ENCODE measurements at regions of chr1 and their contacts with region 1.

Region 1: DNA sequence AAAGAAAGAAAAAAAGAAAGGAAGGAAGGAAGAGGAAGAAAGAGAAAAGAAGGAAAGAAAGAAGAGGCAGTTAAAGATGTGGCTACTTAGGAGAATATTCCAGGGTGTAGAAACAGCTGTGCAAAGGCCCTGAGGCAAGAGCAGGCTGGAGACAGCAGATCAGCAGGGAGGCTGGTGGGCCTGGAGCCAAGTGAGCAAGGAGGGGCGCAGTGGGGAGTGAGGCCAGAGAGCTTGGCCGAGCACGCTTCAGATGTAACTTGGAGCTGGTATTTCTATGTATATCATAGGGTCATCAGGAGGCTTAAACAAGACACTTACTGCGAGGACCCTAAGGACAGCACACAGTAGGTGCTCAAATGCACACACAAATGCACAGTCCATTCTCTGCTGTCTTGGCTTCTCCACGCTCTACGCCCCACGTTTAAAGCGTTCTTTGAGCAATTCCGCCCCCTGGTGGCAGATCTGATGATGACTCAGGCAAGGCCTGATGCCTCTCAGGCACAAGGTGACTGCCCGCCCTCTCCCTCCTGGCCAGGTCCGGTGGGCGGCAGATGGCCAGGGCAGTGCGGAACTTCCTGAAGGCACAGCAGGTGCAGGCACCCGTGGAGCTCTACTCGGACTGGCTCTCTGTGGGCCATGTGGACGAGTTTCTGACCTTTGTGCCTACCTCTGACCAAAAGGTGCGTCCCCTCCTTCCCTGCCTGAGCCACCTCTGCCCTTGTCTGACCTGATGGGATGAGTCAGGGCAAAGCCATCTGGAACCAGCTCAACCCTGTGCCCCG is 11.9 kb upstream of the PADI3 start:
- DNase-seq: peak; percentile 94
- H3K4me3 Mint-ChIP-seq: no peak overlapping the region
- H3K27ac Mint-ChIP-seq: no peak overlapping the region
- H3K4me1 Mint-ChIP-seq: peaks cover 37% of the 10 kb centered on the region
- H3K27me3 Mint-ChIP-seq: no peaks in the 10 kb centered on the region
- CTCF ChIP-seq: peak; percentile 78

Region 2: GRCh38 chr1:17059739-17060460 is 177.1 kb before region 1 on chr1:
- CTCF ChIA-PET with region 1: interaction called, 24 read pairs
- POLR2A ChIA-PET with region 1: no interaction called
- intact Hi-C with region 1: loop called (anchors 2 kb)
- DNase-seq: peak; percentile 77
- H3K4me3 Mint-ChIP-seq: no peak overlapping the region
- H3K27ac Mint-ChIP-seq: no peak overlapping the region
- H3K4me1 Mint-ChIP-seq: no peaks in the 10 kb centered on the region
- H3K27me3 Mint-ChIP-seq: no peaks in the 10 kb centered on the region
- CTCF ChIP-seq: peak; percentile 85

Region 3: GRCh38 chr1:17168091-17168876 is 68.7 kb before region 1 on chr1:
- CTCF ChIA-PET with region 1: interaction called, 5 read pairs
- POLR2A ChIA-PET with region 1: no interaction called
- intact Hi-C with region 1: loop called (anchors 10 kb)
- DNase-seq: peak; percentile 74
- H3K4me3 Mint-ChIP-seq: no peak overlapping the region
- H3K27ac Mint-ChIP-seq: peak overlapping the region; percentile 78
- H3K4me1 Mint-ChIP-seq: peaks cover 42% of the 10 kb centered on the region
- H3K27me3 Mint-ChIP-seq: no peaks in the 10 kb centered on the region
- CTCF ChIP-seq: no peak

Region 4: DNA sequence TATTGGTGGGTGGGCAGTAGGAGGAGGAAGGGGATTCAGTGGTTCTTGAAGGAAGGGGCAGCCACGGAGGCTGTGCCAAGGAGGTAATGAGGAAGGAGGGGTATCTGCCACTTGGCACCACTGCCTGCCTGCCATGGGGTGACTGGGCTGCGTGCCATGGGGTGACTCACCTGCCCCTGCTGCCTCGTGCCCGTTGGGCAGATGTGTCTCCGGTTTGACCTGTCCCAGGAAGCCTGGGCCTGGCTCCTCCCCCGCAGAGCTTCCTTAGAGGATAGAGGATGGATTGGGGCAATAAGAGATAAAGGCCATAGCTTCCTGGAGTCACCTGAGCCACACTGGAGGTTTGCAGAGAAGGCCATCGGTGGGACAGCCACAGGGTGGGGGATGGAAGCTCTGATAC is 13.6 kb after region 1 on chr1:
- CTCF ChIA-PET with region 1: interaction called, 15 read pairs
- POLR2A ChIA-PET with region 1: interaction called, 8 read pairs
- intact Hi-C with region 1: no loop called
- DNase-seq: peak; percentile 97
- H3K4me3 Mint-ChIP-seq: no peak overlapping the region
- H3K27ac Mint-ChIP-seq: peak overlapping the region; percentile 61
- H3K4me1 Mint-ChIP-seq: peaks cover 23% of the 10 kb centered on the region
- H3K27me3 Mint-ChIP-seq: no peaks in the 10 kb centered on the region
- CTCF ChIP-seq: no peak

Region 5: GRCh38 chr1:17287130-17287776 is 50.3 kb after region 1 on chr1:
- CTCF ChIA-PET with region 1: interaction called, 5 read pairs
- POLR2A ChIA-PET with region 1: interaction called, 10 read pairs
- intact Hi-C with region 1: no loop called
- DNase-seq: peak; percentile 96
- H3K4me3 Mint-ChIP-seq: no peak overlapping the region
- H3K27ac Mint-ChIP-seq: no peak overlapping the region
- H3K4me1 Mint-ChIP-seq: peaks cover 15% of the 10 kb centered on the region
- H3K27me3 Mint-ChIP-seq: no peaks in the 10 kb centered on the region
- CTCF ChIP-seq: no peak

Region 6: DNA sequence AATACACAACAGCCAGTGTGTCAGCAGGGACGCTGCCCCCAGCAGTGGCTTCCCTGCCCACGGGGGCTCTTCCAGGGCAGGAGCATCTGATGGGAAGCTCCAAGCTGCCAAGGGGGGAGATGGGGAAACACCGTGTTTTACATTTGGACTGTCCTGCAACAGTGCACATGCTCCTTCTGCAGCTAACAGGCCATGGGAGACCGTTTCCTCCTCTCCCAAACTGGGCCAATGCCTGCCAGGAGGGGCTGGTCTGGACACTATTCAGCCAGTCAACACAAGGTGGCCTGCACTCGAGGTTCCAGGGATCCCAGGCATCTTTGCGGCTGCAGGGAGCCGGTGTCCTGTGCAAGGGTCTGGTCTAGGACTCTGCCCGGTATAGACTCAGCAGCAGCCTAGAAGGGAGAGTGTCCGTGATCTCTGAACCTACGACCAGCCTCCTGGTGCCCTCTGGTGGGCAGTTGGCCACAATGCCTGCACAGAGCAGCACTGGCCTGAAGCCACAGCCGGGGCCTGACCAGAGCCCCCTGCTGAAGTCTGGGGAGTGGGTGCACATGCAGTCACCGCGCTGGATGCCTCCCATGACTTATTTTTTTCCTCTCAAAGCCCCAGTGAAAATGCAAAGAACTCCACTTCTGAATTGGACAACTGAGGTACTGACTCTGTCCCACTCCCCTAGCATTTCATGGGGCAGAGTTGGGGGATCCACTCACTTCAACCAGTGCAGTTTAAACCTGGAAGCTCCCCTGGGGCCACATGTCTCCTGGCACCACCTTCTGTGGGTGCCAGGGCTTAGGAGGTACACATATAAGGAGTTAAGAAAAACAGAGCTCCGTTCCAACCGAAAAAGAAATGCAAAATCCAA is 169.2 kb after region 1 on chr1:
- CTCF ChIA-PET with region 1: interaction called, 22 read pairs
- POLR2A ChIA-PET with region 1: interaction called, 4 read pairs
- intact Hi-C with region 1: loop called (anchors 1 kb)
- DNase-seq: peak; percentile 61
- H3K4me3 Mint-ChIP-seq: no peak overlapping the region
- H3K27ac Mint-ChIP-seq: no peak overlapping the region
- H3K4me1 Mint-ChIP-seq: peaks cover 10% of the 10 kb centered on the region
- H3K27me3 Mint-ChIP-seq: no peaks in the 10 kb centered on the region
- CTCF ChIP-seq: peak; percentile 82

Measured in MCF 10A (cell line).